Tibial artery (tissue), 4 donors: ENCODE measurements at regions of chr1 and their contacts with region 1.

Region 1: DNA sequence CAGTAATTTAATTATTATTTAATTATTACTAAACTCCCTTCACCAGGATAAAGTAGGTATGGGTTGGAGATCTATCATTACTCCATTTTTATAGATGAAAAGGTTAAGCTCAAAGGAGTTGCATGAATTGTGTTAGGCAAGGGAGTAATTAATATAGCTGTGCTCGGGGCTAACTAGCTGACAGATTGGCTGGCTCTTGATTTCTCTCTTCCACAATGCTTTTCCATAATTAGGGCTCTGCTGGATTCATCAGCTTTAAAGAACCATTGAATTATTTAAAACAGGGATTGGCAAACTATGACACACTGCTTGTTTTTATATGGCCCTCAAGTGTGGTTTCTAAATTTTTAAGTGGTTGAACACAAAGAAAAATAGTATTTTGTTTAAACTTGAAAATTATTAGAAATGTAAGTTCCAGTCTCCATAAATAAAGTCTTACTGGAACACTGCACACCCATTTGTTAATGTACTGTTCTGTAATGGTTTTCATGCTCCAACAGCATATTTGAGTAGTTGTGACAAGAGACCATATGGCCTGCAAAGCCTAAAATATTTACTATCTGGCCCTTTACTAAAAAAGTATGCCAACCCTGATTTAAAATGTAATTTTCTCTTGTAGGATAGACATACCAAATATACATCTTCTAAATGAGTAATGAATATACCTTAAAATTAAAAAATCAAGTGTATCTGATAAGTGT is 76.4 kb downstream of the GDAP2 start:
- DNase-seq: no peak
- H3K4me3 ChIP-seq: no peak overlapping the region
- H3K27ac ChIP-seq: no peak overlapping the region
- H3K4me1 ChIP-seq: peaks cover 0 to 10% (median 0%) of the 10 kb centered on the region in 4 donors
- H3K27me3 ChIP-seq: no peaks in the 10 kb centered on the region
- CTCF ChIP-seq: no peak

Region 2: DNA sequence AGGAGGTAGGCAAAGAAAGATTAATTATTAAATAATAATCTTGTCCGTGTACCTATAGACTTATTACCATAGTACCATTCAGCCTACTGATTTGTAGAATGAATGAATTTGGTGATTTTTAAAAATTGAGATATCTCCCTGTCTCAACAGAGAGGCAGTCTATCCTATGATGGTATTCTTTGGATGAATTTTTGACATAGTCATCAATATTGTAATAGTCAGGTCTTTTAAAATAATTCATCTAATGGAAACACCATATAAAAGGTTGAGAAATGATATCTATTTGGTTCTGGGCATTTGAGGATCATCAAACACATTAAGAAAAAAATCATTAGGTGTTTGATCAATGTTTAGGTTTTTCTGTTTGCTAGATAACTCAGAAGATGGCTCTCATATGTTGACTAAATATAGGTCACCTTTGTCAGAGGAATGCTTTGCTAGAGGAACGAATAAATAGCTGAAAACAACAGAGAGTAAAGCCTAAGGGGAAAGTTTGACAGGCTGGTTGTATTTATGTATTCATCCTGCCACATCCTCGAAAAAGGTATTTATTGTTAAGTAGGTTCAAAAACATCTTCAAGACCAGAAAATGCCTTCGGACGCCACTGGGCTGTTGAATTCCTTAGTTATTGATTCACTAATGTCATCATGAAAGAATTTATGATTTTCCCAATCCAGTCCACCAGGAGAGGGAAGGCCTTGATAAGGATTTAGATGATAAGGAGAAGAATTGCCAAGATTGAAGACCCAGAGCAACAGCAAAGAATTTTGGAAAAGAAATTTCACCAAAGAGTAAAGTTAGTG is 1777.2 kb before region 1 on chr1:
- intact Hi-C with region 1: loop called (anchors 5 kb)
- DNase-seq: no peak
- H3K4me3 ChIP-seq: no peak overlapping the region
- H3K27ac ChIP-seq: no peak overlapping the region
- H3K4me1 ChIP-seq: no peaks in the 10 kb centered on the region
- H3K27me3 ChIP-seq: no peaks in the 10 kb centered on the region
- CTCF ChIP-seq: no peak

Region 3: DNA sequence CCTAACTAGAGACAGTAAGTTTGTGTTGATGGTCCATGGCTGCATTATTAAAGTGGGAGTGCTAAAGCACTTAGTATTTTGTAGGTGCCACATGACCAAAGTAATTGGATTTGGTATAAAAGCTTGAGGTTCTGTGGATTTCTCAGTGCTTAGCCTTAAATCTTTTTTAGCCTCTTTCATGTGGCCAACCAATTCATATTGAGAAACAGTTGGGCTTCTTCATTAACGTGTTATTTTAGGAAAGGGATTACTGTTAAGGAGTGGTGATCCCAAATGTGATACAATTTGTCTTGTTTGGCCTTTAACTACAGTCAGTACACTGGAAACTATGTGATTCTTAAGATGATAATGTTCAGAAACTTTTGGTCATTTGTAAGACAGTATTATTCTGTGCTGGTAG is 460.2 kb before region 1 on chr1:
- intact Hi-C with region 1: no loop called
- DNase-seq: no peak
- H3K4me3 ChIP-seq: no peak overlapping the region
- H3K27ac ChIP-seq: no peak overlapping the region
- H3K4me1 ChIP-seq: peaks cover 0 to 23% (median 5%) of the 10 kb centered on the region in 4 donors
- H3K27me3 ChIP-seq: no peaks in the 10 kb centered on the region
- CTCF ChIP-seq: no peak

Region 4: GRCh38 chr1:117795190-117795589 is 57.8 kb before region 1 on chr1:
- intact Hi-C with region 1: no loop called
- DNase-seq: no peak
- H3K4me3 ChIP-seq: no peak overlapping the region
- H3K27ac ChIP-seq: no peak overlapping the region
- H3K4me1 ChIP-seq: peaks cover 0 to 22% (median 10%) of the 10 kb centered on the region in 4 donors
- H3K27me3 ChIP-seq: no peaks in the 10 kb centered on the region
- CTCF ChIP-seq: no peak